ENCODE measurements at regions of chr5 and their contacts with region 1.

Region 1: GRCh38 chr5:158174918-158175851 is 316.2 kb upstream of the CLINT1 start:
- DNase-seq: no peak
- H3K4me3 ChIP-seq: no peak overlapping the region
- H3K27me3 ChIP-seq: no peaks in the 10 kb centered on the region; the same call in none of the 2 replicates
- CTCF ChIP-seq: peak; percentile 83

Region 2: GRCh38 chr5:159133041-159133741 is 958.0 kb after region 1 on chr5:
- CTCF ChIA-PET with region 1: interaction called, 10 read pairs
- POLR2A ChIA-PET with region 1: no interaction called
- DNase-seq: no peak
- H3K4me3 ChIP-seq: no peak overlapping the region
- H3K27me3 ChIP-seq: peaks cover 1% of the 10 kb centered on the region; the same call in 1 of the 2 replicates
- CTCF ChIP-seq: peak; percentile 71

Measured in BJ (cell line).